Activated CD4-positive, alpha-beta T cell treated with anti-CD3 and anti-CD28 coated beads for 36 hours (primary cell): ENCODE measurements at regions of chr20 and their contacts with region 1.

Region 1: DNA sequence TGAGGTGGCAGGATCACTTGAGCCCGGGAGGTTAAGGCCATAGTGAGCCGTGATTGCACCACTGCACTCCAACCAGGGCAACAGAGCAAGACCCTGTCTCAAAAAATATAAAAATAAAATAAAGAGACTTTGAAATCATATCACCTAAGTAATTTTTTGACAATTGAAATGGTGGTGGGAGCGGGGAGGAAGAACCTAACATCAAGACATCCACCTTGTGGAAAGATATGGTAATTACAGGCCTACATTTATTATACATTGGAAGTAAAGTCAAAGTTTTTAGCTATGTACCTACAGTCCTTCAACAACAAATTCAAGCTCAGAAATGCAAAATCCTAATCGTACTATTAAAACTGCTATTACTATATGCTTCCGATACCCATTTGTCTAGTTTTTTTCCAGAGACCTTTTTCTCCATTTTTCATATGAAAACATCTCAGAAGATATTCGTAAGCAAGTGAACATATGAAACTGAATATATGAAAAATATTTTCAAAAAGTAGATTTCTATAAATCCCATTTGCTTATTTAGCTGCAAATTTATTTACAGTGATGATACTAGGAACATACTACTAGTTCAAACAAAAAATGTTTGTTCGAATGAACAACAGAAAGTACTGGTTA is 83.3 kb downstream of the SYCP2 start:
- DNase-seq: no peak
- ATAC-seq: no peak
- H3K4me3 Mint-ChIP-seq: no peak overlapping the region
- H3K27ac Mint-ChIP-seq: no peak overlapping the region
- H3K4me1 Mint-ChIP-seq: no peaks in the 10 kb centered on the region
- H3K27me3 Mint-ChIP-seq: no peaks in the 10 kb centered on the region

Region 2: DNA sequence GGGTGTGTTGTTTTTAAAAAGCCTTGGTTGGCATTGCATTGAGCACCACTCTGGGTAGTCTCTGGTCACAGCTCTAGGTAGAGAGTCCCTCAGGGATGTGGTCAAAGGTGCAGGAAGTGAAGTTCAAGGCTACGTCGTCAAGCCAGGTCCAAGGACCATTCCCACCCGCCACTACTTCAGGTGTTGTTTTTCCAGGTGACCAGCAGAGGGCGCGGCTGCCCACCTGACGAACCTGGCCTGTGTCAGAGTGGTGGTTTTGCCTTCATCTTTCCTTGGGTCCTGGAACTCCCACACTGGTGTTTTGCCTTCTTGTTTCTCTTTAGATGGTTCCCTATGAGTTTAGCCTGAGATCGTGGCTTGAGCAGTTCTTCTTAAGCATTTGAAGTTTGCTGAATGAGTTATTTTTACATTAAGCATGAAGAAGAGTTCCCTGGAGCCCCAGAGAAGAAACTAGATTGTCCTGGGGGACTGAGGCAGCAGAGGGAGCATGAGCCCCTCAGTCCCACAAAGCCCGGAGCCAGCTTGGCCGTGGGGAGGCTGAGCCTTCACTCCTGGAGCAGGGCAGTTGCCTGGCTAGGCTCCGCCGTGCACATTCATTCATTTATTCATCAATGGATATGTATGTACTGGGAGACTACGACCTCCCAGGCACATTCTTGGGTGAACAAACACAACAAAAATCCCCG is 251.4 kb before region 1 on chr20:
- CTCF ChIA-PET with region 1: interaction called, 3 read pairs
- POLR2A ChIA-PET with region 1: no interaction called
- intact Hi-C with region 1: loop called in 1 of 2 experiments (anchors 2 kb)
- DNase-seq: peak; percentile 65
- ATAC-seq: no peak
- H3K4me3 Mint-ChIP-seq: no peak overlapping the region
- H3K27ac Mint-ChIP-seq: no peak overlapping the region
- H3K4me1 Mint-ChIP-seq: no peaks in the 10 kb centered on the region
- H3K27me3 Mint-ChIP-seq: peaks cover 42% of the 10 kb centered on the region

Region 3: DNA sequence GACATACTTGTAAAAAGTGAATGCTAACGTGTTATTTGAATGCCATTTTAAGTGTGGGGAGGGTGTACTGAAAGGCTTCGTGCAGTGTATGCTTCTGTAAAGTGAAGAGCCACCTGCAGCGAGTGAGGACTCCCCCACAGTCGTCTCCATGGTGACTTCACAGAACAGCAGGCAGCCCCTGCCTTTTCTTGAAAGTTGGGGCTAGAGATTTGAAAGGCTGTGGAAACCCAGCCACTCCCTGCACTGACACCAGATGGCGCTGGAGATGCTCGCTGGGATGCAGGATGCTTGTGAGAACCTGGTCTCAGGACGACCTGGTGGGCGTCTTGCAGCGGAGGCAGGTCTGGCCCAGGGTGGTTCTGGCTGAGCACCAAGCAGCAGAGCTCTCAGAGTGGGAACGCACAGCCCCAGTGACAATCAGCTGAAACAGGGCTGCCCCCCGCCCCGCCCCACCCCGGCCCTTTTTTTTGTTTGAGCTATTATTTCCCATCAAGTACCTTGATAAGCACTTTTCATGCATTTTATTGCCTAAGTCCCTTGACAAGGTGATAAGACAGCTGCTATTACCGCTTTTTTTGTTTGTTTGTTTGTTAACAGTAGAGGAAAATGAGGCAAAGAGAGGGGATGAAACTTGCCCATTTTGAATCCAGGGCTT is 67.0 kb before region 1 on chr20:
- CTCF ChIA-PET with region 1: interaction called, 38 read pairs
- POLR2A ChIA-PET with region 1: no interaction called
- intact Hi-C with region 1: loop called (anchors 1 to 2 kb)
- DNase-seq: peak; percentile 71
- ATAC-seq: peak; percentile 33
- H3K4me3 Mint-ChIP-seq: no peak overlapping the region
- H3K27ac Mint-ChIP-seq: no peak overlapping the region
- H3K4me1 Mint-ChIP-seq: no peaks in the 10 kb centered on the region
- H3K27me3 Mint-ChIP-seq: peaks cover 10% of the 10 kb centered on the region

Region 4: DNA sequence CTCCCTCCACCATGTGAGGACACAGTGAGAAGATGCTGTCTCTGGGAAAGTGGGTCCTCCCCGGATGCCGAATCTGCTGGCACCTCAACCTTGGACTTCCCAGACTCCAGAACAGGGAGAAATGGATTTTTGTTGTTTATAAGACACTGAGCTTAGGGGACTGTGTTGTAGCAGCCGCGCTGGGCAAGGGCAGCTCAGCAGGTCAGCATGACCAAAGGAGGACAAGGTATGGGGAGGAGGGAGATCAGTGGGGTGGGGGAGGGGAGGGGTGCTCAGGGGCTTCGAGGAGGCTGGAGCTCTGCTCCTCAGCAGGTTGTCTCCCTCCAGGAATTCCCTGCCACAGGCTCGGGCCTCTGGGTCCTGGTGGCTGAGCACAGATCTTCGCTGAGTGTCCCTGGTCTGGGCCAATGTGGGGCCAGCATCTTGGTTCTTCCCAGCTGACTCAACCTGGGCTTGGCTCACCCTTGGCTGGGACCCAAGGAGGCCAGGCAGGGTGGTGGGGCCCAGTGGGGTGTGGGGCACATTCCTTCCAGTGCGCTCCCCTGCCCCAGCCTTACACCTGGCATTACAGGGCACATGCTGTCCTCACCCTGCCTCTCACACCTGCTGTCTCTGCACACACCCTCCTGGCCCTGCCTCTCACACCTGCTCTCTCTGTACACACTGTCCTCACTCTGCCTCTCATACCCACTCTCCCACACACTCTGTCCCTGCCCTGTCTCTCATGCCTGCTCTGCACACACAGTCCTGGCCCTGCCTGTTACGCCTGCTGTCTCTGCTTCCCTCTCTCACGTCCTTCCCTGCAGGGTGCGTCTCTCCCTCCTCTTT is 24.0 kb before region 1 on chr20:
- CTCF ChIA-PET with region 1: no interaction called
- POLR2A ChIA-PET with region 1: no interaction called
- intact Hi-C with region 1: no loop called
- DNase-seq: no peak
- ATAC-seq: no peak
- H3K4me3 Mint-ChIP-seq: no peak overlapping the region
- H3K27ac Mint-ChIP-seq: no peak overlapping the region
- H3K4me1 Mint-ChIP-seq: no peaks in the 10 kb centered on the region
- H3K27me3 Mint-ChIP-seq: peaks cover 14% of the 10 kb centered on the region

Region 5: DNA sequence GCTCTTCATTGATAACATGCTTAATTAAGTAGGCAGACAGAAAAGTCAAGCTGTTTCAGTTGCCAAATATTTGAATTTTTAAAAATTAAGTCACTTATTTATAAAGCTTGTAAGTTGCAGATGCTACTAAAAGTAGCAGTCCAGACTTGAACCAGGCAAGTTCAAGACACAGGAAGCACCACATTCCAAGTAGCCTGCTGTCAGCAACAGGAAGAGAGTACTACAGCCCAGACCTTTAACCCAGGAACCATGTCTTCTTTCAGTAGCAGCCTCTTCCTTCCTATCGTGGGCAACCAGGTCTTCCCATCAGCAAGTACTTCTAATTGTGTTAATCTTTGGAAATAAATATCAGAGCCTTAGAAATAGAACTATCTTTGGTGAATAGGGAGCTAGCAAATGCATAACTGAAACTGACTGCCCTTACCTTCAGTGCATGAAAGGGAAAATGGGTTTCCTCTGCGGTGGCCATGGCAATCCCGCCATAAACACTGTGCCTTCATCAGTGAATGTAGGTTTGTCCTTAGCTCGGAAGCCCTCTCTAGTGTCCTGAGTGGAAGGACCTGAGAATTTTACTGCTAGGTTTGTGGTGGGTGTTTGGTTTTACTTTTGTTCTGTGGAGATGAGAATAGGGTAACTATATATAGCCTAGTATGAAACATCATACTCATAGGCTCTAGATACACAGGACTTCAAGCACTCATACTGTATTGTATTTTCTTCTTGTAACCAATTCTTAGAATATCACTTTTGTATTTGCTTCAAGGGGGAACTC is 12.3 kb before region 1 on chr20:
- CTCF ChIA-PET with region 1: interaction called, 15 read pairs
- POLR2A ChIA-PET with region 1: no interaction called
- intact Hi-C with region 1: no loop called
- DNase-seq: no peak
- ATAC-seq: no peak
- H3K4me3 Mint-ChIP-seq: no peak overlapping the region
- H3K27ac Mint-ChIP-seq: no peak overlapping the region
- H3K4me1 Mint-ChIP-seq: peaks cover 3% of the 10 kb centered on the region
- H3K27me3 Mint-ChIP-seq: peaks cover 25% of the 10 kb centered on the region

Region 6: GRCh38 chr20:60316476-60317158 is 466.5 kb after region 1 on chr20:
- CTCF ChIA-PET with region 1: no interaction called
- POLR2A ChIA-PET with region 1: no interaction called
- intact Hi-C with region 1: no loop called
- DNase-seq: no peak
- ATAC-seq: no peak
- H3K4me3 Mint-ChIP-seq: no peak overlapping the region
- H3K27ac Mint-ChIP-seq: no peak overlapping the region
- H3K4me1 Mint-ChIP-seq: no peaks in the 10 kb centered on the region
- H3K27me3 Mint-ChIP-seq: no peaks in the 10 kb centered on the region